Left ventricle myocardium superior (tissue), 1 donor: ENCODE measurements at regions of chr12 and their contacts with region 1.

Region 1: DNA sequence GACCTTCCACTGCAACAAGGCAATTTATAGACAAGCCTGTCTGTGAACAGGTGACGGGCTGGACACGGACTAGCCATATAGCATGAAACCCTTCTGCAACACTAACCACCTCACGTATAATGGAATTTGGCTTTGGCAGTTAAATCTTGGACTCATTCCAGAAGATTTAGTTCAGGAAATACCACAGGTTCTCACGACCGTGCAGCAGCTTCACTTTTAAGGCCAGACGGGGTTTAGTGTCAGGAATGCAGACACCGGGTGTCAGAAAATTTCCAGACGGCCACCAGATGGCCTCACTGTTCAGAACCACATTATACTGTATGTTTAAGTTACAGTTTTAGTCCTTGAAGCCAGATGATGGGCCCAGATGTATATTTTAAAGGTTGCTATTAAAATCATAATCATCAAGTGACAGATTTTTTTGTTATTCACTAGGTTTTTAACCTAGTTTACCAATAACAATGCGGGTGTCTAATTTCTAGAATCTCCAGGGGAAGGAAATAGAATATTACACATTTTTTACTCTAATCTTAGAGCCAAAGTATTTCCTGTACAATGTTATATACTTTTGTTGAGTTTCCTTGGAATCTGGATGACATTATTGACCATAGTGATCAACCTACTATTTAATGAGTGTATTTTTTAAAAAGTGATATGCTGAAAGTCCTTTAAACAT is 90.5 kb upstream of the TMPO start:
- DNase-seq: peak; percentile 64
- ATAC-seq: peak; percentile 73

Region 2: DNA sequence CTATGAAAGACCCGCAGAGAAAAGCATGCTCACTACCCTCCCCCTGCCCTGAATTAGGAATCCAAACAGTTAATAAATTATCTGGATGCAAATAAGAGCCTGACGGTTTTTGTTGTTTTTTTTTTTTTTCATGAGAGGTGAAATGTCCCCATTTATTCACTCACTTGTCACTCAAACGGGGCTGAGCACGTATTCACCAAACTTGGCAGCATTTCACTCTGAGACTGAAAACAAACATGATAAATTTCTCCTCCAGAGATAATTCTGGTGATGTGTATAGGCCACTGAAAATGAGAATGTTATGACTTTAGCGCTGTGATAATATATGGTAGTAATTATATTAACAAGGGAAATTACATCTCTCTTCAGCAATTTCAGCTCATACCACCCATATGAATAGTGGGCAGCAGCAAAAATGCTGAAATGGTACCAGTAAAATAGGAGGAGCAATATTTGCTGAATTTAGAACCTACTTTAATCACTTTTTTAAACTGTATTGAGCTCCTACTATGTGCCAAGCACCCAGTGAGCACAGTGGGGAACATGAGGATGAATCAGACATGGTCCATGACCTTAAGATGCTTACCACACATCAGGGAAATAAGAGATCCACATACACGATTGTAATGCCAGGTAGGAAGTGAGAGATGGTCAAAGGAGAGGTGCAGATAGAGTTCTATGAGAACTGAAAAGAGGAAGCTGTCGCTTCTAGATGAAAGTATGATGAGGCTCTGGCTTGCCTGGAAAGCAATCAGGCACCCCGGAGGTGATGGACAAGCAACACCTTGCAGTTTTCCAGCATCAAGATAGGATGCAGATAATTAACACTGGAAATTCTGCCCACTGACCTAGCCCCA is 196.0 kb before region 1 on chr12:
- intact Hi-C with region 1: no loop called
- DNase-seq: no peak
- ATAC-seq: no peak

Region 3: GRCh38 chr12:98503592-98504367 is 78.9 kb after region 1 on chr12:
- intact Hi-C with region 1: loop called (anchors 10 kb)
- DNase-seq: peak; percentile 96
- ATAC-seq: peak; percentile 94